Breast epithelium (tissue), 4 donors: ENCODE measurements at regions of chr21 and their contacts with region 1.

Region 1: GRCh38 chr21:39576531-39577128 is 36.1 kb upstream of the B3GALT5 start:
- DNase-seq: no peak
- H3K4me3 ChIP-seq: no peak overlapping the region
- H3K27ac ChIP-seq: no peak overlapping the region
- H3K4me1 ChIP-seq: no peaks in the 10 kb centered on the region
- H3K27me3 ChIP-seq: no peaks in the 10 kb centered on the region
- CTCF ChIP-seq: no peak
- POLR2A ChIP-seq: no peak

Region 2: DNA sequence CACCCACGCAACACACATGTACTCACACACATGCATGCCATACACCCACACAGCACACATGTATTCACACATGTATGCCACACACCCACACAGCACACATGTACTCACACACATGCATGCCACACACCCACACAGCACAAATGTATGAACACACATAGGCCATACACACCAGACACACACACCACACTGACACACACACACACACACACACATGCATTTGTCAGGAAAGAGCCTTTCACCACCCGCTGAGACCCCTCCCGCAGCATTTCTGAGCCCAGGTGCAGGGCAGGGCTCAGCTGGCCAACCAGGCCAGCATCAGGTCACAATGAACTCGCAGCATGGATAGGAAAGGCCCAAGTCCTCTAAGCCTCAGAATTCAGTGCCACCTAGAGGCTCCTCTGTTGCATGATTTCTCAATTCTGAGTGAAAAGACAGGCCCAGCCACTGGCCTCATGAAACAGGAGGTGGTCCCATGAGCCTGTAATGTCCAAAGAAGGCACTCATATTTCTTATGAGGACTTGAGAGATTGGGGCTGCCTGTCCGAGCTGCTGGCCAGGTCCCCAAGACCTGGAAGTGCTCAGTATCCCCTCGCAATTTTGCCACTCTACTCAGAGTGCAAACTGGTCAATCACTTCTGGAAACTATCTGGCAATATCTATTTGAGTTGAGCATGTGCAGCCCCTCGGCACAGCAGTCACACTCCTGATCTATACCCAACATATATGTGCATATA is 450.7 kb before region 1 on chr21:
- intact Hi-C with region 1: no loop called
- DNase-seq: peak in 1 of 2 donors; percentile 45
- H3K4me3 ChIP-seq: no peak overlapping the region
- H3K27ac ChIP-seq: peak overlapping the region; percentile 4 to 25
- H3K4me1 ChIP-seq: no peaks in the 10 kb centered on the region
- H3K27me3 ChIP-seq: no peaks in the 10 kb centered on the region
- CTCF ChIP-seq: peak; percentile 17 to 60 (median 50)
- POLR2A ChIP-seq: no peak

Region 3: GRCh38 chr21:39564200-39564599 is 12.4 kb before region 1 on chr21:
- intact Hi-C with region 1: loop called (anchors 1 kb)
- DNase-seq: peak in 1 of 2 donors; percentile 56
- H3K4me3 ChIP-seq: no peak overlapping the region
- H3K27ac ChIP-seq: peak overlapping the region; percentile 10 to 63
- H3K4me1 ChIP-seq: no peaks in the 10 kb centered on the region
- H3K27me3 ChIP-seq: no peaks in the 10 kb centered on the region
- CTCF ChIP-seq: no peak
- POLR2A ChIP-seq: no peak

Region 4: DNA sequence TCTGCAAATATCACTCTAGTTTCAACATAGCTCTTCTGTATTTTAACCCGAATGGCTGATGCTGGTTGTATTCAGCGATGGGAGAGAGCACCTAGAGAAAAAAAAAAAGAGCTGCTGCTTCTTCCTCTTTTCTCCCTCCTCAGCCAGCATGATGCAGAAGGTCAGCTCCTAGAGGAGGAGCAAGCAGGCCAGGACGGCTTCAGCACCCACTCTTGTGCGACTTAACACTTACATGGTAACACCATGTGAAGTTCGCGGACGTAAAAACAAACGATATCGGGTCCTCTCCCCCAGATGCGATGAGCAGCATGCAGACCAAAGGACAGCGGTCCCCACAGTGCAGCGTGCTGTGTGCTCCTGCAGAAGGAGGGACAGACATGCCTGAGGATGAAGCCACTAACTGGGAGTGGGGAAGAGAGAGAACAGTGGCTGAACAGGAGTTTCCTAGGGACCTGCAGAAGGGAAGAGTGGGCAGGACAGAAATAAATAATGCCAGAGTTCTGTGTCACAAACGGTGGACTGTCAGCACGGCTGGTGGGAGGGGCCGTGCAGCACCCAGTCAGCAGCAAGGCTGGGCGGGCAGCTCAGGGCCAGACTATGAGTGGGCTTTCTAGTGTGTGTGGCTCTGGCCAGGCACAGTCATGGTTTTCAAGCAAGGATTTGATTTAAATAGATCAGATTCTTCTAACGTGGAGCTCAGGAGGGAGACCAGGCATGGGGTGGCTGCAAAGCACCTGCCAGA is 24.7 kb after region 1 on chr21:
- intact Hi-C with region 1: loop called (anchors 1 kb)
- DNase-seq: no peak
- H3K4me3 ChIP-seq: no peak overlapping the region
- H3K27ac ChIP-seq: no peak overlapping the region
- H3K4me1 ChIP-seq: no peaks in the 10 kb centered on the region
- H3K27me3 ChIP-seq: no peaks in the 10 kb centered on the region
- CTCF ChIP-seq: no peak
- POLR2A ChIP-seq: no peak

Region 5: DNA sequence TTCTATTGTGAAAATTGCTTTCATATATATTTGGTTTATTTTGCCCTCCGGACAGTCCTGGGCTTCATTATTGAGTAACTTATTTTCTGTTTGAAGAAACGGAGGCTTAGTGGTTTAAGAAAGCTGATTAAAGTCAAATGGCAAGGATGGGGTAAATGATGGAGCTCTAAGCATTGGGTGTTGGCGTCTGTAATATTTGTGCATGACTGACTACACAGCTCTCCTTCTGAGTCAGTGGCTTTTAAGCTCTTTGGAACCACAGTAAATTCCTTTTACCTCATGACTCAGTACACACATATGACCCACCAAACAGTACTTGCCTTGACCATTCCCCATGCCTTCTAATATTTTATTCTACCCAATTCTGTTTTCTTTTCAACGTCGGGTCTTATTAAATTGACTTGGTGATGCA is 57.1 kb after region 1 on chr21:
- intact Hi-C with region 1: no loop called
- DNase-seq: no peak
- H3K4me3 ChIP-seq: no peak overlapping the region
- H3K27ac ChIP-seq: no peak overlapping the region
- H3K4me1 ChIP-seq: no peaks in the 10 kb centered on the region
- H3K27me3 ChIP-seq: no peaks in the 10 kb centered on the region
- CTCF ChIP-seq: no peak
- POLR2A ChIP-seq: no peak